ENCODE measurements at regions of chr17 and their contacts with region 1.

Region 1: DNA sequence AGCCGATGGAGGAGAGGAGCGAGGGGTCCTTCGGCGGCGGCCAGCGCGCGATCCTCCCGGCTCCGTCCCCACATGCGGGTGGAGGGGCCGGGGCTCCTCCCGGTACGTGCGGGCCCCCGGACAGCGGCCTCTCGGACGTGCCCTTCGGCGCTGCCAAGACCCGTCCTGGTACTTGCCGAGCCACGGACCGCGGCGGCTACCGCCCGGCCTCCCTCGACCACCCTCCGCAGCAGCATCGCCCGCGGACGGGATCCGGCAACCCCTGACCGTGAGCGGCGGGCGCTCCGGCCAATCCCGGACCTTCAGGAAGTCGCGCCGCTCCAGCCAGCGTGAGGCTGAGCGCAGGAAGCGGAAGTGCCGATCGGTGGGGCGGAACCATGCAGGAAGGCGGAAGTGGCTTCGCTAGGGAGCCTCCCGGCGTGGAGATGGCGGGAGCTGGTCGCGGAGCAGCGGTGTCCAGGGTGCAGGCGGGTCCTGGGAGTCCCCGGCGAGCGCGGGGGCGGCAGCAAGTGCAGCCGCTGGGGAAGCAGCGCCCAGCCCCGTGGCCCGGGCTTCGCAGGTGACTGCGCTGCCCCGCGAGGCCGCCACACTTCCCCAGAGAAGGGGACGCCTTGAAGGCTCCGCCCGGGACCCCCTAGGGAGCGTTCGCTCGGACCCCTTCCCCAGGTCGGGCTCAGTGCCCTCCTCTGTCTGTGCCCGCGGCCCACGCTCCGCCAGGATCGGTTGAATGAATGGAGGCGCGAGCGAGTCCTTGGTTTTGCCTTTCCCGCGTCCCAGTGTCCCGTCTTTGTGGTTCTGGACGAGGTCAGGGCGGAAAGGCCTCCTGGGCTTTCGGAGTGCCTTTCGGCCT is at the starts of genes CCDC137 and OXLD1:
- DNase-seq: peak; percentile 94
- H3K4me3 Mint-ChIP-seq: peak within 1 kb of the TSS; percentile 93
- H3K27ac Mint-ChIP-seq: peak within 1 kb of the TSS; percentile 94
- H3K4me1 Mint-ChIP-seq: peaks cover 62% of the 10 kb centered on the region
- H3K27me3 Mint-ChIP-seq: no peaks in the 10 kb centered on the region
- total RNA-seq, gene CCDC137: 28.8 to 33.3 TPM
- total RNA-seq, gene OXLD1: 59.3 TPM

Region 2: DNA sequence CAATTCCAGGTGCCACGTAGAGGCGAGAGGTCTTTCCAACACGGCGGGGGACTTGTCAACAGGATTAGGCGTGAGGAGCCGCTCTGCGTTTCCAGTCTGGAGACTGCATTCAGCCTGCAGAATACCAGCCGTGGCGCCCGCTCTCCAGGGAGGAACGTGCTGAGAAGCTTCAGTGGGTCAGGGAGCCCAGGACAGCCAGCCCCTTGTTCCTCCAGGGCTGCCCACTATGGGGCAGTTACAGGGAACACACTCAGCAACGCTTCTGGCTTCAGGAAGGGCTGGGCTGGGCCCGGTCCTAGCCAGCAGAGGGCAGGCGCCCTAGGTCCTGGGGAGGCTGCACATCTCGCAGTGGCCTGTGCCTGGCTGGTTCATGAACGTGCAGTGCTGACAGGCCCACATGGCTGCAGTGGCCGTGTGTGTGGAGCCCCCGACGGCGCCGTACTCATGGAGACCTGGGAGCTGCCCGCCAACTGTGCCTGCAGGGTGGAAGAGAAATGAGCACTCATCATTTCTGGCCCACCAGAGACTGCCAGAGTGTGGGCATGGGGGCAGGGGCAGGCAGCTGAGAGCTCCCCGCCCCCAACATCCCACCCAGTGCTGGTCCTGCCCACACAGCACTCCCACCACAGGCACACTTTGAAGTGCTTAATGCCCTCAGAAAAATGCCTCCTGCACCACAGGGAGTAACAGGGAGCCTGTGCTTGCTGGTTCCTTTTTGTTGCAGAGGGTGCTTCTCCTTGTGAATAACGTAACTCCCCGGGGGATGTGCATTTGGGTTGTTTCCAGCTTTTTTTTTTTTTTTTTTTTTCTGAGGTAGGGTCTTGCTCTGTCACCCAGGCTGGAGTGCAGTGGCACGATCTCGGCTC is 107.4 kb before region 1 on chr17:
- CTCF ChIA-PET with region 1: no interaction called
- POLR2A ChIA-PET with region 1: no interaction called
- DNase-seq: no peak
- H3K4me3 Mint-ChIP-seq: no peak overlapping the region
- H3K27ac Mint-ChIP-seq: no peak overlapping the region
- H3K4me1 Mint-ChIP-seq: peaks cover 4% of the 10 kb centered on the region
- H3K27me3 Mint-ChIP-seq: no peaks in the 10 kb centered on the region

Region 3: GRCh38 chr17:81636505-81637288 is 29.9 kb before region 1 on chr17 and contains the starts of genes NPLOC4 and TSPAN10:
- CTCF ChIA-PET with region 1: no interaction called
- POLR2A ChIA-PET with region 1: interaction called, 26 read pairs
- DNase-seq: peak; percentile 81
- H3K4me3 Mint-ChIP-seq: peak within 1 kb of the TSS; percentile 98
- H3K27ac Mint-ChIP-seq: peak within 1 kb of the TSS; percentile 83
- H3K4me1 Mint-ChIP-seq: peaks cover 23% of the 10 kb centered on the region
- H3K27me3 Mint-ChIP-seq: no peaks in the 10 kb centered on the region
- total RNA-seq, gene NPLOC4: 84.6 to 89.0 TPM
- total RNA-seq, gene TSPAN10: 0.38 to 0.43 TPM

Region 4: DNA sequence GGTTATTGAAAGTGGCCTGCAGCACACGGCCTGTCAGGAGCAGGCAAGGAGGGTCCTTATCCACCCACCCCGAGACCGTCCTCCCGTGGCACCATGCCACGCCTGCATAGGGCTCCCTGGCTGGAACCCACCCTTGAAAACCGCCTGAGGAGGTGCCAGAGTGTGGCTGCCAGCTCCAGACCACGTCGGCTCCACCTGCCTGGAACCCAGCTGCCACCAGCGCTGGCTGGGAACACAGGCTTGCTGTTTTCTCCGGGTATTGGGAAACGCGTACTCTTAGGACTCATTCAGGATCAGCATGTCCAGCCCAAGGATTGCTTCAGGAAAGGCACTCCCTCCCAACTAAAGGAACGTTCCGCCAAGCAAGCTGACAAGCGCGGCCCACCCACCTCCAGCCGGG is 10.3 kb after region 1 on chr17:
- CTCF ChIA-PET with region 1: interaction called, 6 read pairs
- POLR2A ChIA-PET with region 1: interaction called, 47 read pairs
- DNase-seq: no peak
- H3K4me3 Mint-ChIP-seq: no peak overlapping the region
- H3K27ac Mint-ChIP-seq: no peak overlapping the region
- H3K4me1 Mint-ChIP-seq: peaks cover 5% of the 10 kb centered on the region
- H3K27me3 Mint-ChIP-seq: no peaks in the 10 kb centered on the region

Region 5: DNA sequence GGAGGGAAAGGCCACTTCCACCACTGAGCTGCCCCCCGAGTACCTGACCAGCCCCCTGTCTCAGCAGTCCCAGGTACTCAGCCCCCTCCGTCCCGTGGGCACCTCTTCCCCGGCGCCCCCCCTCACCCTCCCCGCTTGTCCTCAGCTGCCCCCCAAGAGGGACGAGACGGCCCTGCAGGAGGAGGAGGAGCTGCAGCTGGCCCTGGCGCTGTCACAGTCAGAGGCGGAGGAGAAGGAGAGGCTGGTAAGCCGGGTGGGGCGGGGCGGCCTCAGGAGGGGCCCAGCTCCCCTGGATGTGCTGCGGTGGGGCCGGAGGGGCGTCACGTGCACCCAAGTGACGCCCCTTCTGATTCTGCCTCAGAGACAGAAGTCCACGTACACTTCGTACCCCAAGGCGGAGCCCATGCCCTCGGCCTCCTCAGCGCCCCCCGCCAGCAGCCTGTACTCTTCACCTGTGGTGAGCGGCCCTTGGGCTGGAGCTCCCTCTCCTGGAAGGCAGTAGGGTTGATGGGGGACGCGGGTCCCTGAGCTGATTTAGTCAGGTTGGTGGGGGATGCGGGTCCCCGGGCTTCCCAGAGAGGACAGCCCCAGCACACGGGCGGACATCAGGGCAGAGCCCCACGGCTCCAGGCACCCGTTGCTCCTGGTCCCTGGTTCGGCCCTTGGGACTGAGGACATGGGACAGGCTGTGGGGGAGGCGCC is 27.1 kb after region 1 on chr17:
- CTCF ChIA-PET with region 1: no interaction called
- POLR2A ChIA-PET with region 1: no interaction called
- DNase-seq: no peak
- H3K4me3 Mint-ChIP-seq: no peak overlapping the region
- H3K27ac Mint-ChIP-seq: no peak overlapping the region
- H3K4me1 Mint-ChIP-seq: no peaks in the 10 kb centered on the region
- H3K27me3 Mint-ChIP-seq: no peaks in the 10 kb centered on the region

Region 6: DNA sequence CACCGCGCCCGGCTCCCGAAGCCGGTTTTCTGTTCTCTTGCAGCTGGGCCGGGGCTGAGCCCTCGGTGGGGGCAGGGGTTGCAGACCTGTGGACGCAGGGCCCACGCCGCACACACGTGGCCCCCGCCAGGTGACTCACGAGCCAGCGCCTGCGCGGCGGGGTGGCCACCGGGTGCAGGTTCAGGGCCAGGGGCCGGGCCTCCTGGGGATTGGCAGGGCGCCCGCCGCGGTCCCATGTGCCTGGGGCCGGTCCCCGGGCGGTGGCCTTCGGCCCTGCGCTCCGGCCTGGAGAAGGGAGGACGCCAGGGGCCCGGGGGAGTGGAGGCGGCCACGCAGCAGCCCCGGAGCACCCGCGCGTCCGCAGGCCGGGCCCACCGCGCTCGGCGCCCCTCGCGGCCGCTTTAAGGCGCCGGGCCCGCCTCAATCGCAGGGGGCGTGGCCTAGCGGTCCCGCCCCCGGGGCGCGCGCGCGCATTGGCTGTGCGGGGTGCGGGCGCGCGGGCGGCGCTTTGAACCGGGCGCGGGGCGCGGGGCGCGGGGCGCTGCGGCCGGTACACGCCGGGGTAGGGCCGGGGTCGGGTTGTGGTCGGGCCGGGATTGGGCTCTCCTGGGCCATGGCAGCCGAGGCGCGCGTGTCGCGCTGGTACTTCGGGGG is 45.4 kb after region 1 on chr17 and contains the start of gene SLC25A10:
- CTCF ChIA-PET with region 1: no interaction called
- POLR2A ChIA-PET with region 1: no interaction called
- DNase-seq: peak; percentile 86
- H3K4me3 Mint-ChIP-seq: peak within 1 kb of the TSS; percentile 89
- H3K27ac Mint-ChIP-seq: peak within 1 kb of the TSS; percentile 64
- H3K4me1 Mint-ChIP-seq: peaks cover 28% of the 10 kb centered on the region
- H3K27me3 Mint-ChIP-seq: no peaks in the 10 kb centered on the region
- total RNA-seq, gene SLC25A10: 18.5 to 22.1 TPM

Measured in activated CD4-positive, alpha-beta memory T cell treated with anti-CD3 and anti-CD28 coated beads, Interleukin-2, amount 10 ng/mL, durations not matched to agents 7 days and 5 days (primary cell).